BJ (cell line): ENCODE measurements at regions of chr9 and their contacts with region 1.

Region 1: GRCh38 chr9:33354651-33355211 is 47.6 kb downstream of the AQP7 start:
- DNase-seq: no peak
- H3K4me3 ChIP-seq: no peak overlapping the region
- H3K27me3 ChIP-seq: no peaks in the 10 kb centered on the region
- CTCF ChIP-seq: no peak

Region 2: DNA sequence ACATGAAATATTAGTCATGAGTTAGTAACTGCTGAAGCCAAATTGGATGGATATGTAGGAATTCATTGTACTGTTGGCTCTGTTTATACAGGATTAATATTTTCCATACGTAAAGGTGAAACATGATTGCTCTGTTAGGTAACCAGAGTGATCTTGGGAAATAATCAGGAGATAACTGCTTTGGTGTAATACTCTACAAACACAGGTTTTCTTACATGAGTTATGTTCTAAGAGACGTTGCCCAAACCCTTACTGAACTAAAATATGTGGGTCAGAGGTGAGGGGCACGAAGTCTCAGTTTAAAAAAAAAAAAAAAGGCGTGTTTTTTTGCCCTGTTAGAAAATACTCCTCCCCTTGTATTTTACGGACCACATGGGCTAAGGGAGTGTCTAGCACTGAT is 321.9 kb before region 1 on chr9:
- CTCF ChIA-PET with region 1: no interaction called
- POLR2A ChIA-PET with region 1: no interaction called
- DNase-seq: no peak
- H3K4me3 ChIP-seq: no peak overlapping the region
- H3K27me3 ChIP-seq: no peaks in the 10 kb centered on the region
- CTCF ChIP-seq: no peak

Region 3: GRCh38 chr9:34048923-34049697 is 694.4 kb after region 1 on chr9:
- CTCF ChIA-PET with region 1: no interaction called
- POLR2A ChIA-PET with region 1: interaction called, 17 read pairs
- DNase-seq: peak; percentile 82
- H3K4me3 ChIP-seq: peak overlapping the region; percentile 71
- H3K27me3 ChIP-seq: no peaks in the 10 kb centered on the region
- CTCF ChIP-seq: peak; percentile 19; the same call in 1 of the 2 replicates